HEK293 (cell line): ENCODE measurements at regions of chr2 and their contacts with region 1.

Region 1: DNA sequence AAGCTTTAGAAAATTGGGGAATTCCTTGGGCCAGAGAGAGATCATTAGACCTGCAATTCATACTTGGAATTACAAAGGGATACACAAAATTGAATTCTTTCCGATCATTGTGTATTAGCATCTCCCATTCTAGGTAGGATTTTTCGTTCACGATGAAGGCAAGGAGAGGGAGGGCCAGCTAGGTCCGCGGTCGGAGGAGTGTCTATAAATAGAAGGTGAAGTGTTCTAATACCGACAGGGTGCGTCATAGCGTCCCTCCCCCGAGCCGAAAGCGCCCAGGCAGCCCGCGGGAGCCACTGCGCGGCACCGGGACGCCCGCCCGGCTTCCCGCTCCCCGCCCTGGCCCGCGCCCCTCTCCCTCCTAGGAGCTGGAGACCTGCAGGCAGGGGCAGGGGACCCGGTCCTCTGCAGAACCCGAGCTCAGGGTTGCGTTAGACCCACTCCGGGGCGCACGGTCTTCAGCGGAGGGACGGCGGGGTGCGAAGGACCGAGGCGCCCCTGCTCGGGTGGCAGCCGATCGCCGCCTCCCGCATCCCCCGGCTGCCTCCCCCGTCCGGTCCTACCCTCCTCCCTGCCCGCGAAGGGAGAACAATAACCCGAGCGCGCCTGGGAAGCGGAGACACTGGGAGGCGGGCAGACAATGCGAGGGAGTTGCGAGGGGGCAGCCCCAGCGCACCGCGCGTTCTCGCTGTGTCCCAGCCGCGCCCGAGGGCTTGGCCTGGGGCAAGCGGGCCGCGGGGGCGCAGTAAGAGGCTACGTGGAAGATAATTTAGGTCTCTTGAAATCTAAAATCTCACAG is 114.2 kb upstream of the SERTAD2 start:
- H3K4me3 ChIP-seq: peak overlapping the region; percentile 64
- H3K27ac ChIP-seq: peak overlapping the region; percentile 92
- H3K4me1 ChIP-seq: peaks cover 9% of the 10 kb centered on the region
- CTCF ChIP-seq: peak; percentile 59

Region 2: GRCh38 chr2:65040400-65041261 is 272.8 kb after region 1 on chr2:
- CTCF ChIA-PET with region 1: interaction called, 10 read pairs
- POLR2A ChIA-PET with region 1: no interaction called
- H3K4me3 ChIP-seq: no peak overlapping the region
- H3K27ac ChIP-seq: no peak overlapping the region
- H3K4me1 ChIP-seq: no peaks in the 10 kb centered on the region
- CTCF ChIP-seq: peak; percentile 88